Cardiac septum (tissue), 1 donor: ENCODE measurements at regions of chr5 and their contacts with region 1.

Region 1: GRCh38 chr5:128905571-128906110 is 59.6 kb upstream of the SLC27A6 start:
- DNase-seq: no peak

Region 2: GRCh38 chr5:128711216-128711615 is 194.4 kb before region 1 on chr5:
- intact Hi-C with region 1: no loop called
- DNase-seq: no peak

Region 3: GRCh38 chr5:128815201-128815600 is 90.4 kb before region 1 on chr5:
- intact Hi-C with region 1: no loop called
- DNase-seq: no peak

Region 4: GRCh38 chr5:129271303-129271702 is 365.7 kb after region 1 on chr5:
- intact Hi-C with region 1: loop called (anchors 5 kb)
- DNase-seq: no peak